ENCODE measurements at regions of chr15 and their contacts with region 1.

Region 1: GRCh38 chr15:25933456-25934158 is 70.5 kb upstream of the ATP10A start:
- DNase-seq: peak; percentile 75
- ATAC-seq: peak; percentile 95
- H3K4me3 ChIP-seq: peak overlapping the region; percentile 59
- H3K27ac ChIP-seq: no peak overlapping the region
- H3K4me1 ChIP-seq: no peaks in the 10 kb centered on the region
- H3K27me3 ChIP-seq: no peaks in the 10 kb centered on the region
- CTCF ChIP-seq: peak; percentile 76

Region 2: DNA sequence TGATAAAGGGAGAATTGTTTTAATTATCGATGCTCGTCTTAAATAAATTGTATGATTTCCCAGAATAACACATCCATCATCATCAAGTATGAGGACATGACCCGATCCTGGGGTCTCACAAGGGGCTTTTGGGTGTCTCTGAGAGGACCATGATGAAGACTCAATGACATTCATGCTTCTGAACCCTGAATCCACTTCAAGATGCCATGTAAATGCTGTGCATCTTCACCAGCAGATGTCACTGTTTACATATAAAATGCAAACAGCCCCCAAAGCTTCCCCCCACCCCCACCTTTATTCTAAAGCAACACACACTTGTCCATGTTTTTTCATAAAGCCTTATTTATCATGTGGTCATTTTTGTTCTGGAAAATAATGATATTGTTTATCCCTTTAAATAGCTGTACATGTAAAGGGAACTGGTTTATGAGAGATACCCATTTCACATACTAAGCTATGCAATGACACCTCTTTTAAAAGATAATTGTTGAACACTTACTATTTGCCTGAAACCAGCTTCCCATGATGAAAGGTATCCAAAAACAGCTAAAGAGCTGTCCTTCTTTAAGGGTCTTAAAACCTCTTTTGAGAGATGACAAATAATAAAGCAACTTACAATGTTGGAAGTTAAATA is 425.1 kb before region 1 on chr15:
- CTCF ChIA-PET with region 1: no interaction called
- POLR2A ChIA-PET with region 1: no interaction called
- intact Hi-C with region 1: loop called (anchors 2 kb)
- DNase-seq: peak; percentile 42
- ATAC-seq: no peak
- H3K4me3 ChIP-seq: no peak overlapping the region
- H3K27ac ChIP-seq: no peak overlapping the region
- H3K4me1 ChIP-seq: no peaks in the 10 kb centered on the region; the same call in 1 of the 2 replicates
- H3K27me3 ChIP-seq: no peaks in the 10 kb centered on the region
- CTCF ChIP-seq: peak; percentile 86

Region 3: DNA sequence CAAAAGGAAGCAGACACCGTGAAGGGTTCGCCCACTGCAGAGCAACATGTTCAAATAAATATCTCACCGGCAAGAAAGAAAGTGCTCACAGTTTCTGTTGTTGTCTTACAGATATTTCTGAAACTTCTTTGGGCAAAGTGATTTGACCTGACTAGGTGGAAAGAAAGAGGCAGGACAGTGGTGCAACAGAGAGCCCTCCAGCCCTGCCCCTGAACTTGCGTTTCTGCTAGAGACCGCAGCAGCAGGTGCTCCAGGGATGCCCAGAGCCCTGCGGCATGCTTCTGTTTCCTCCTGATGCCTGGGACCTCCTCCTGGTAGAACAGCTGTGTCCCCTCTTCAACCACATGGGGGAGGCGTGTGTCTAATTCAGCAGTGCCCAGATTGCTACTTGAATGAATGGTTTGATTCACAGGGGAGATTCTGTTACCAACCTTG is 193.9 kb before region 1 on chr15:
- CTCF ChIA-PET with region 1: no interaction called
- POLR2A ChIA-PET with region 1: no interaction called
- intact Hi-C with region 1: loop called (anchors 2 kb)
- DNase-seq: peak; percentile 38
- ATAC-seq: peak; percentile 49; the same call in 1 of the 2 replicates
- H3K4me3 ChIP-seq: no peak overlapping the region
- H3K27ac ChIP-seq: no peak overlapping the region
- H3K4me1 ChIP-seq: no peaks in the 10 kb centered on the region
- H3K27me3 ChIP-seq: no peaks in the 10 kb centered on the region
- CTCF ChIP-seq: peak; percentile 49

Region 4: DNA sequence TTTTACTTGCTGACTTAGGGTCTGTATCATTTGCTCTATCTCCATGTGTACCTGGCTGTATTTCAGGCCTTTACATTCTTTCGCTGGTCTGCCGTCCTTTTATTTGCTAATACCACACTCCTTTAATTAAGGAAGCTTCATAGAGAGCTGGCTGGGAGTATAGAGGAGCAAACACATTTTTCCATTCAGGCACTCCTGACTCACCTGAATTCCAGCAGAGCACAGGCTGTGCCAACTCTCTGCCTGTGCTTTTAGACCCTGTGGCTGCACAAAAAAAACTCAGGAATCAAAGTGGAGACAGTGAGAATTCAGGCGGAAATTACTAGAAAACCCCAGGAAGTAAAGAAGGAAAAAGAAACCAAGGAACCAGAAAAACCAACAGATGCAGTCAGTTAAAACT is 41.5 kb before region 1 on chr15:
- CTCF ChIA-PET with region 1: no interaction called
- POLR2A ChIA-PET with region 1: no interaction called
- intact Hi-C with region 1: loop called (anchors 5 kb)
- DNase-seq: peak; percentile 71
- ATAC-seq: peak; percentile 60
- H3K4me3 ChIP-seq: no peak overlapping the region
- H3K27ac ChIP-seq: peak overlapping the region; percentile 44
- H3K4me1 ChIP-seq: peaks cover 65% of the 10 kb centered on the region
- H3K27me3 ChIP-seq: no peaks in the 10 kb centered on the region
- CTCF ChIP-seq: no peak

Region 5: DNA sequence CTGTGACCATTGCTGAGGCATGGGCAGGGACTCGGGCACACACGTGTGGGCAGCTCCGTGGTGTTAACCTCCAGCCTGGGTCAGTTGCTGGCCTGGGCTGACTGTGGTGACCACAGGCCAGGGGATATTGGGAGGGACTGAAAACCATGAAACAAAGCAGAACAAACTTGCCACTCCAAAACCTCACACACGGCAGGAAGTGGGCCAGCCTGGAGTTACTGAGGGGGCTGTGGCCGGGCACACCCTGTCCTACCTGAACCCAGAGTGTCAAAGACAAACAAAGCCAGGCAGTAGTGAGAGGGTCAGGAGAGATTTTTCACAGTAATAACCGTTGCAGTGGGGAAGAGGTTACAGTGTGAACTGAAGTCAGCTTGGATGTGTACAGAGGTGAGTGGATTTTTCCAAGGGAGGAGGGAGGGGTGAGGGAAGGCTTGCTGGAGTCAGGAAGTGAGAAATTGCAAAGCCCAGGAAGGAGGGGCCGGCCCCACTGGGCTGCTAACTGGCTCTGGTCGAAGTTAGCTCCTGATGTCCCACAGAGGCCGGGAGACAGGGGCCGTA is 30.5 kb before region 1 on chr15:
- CTCF ChIA-PET with region 1: interaction called, 21 read pairs
- POLR2A ChIA-PET with region 1: no interaction called
- intact Hi-C with region 1: no loop called
- DNase-seq: peak; percentile 80
- ATAC-seq: peak; percentile 78
- H3K4me3 ChIP-seq: no peak overlapping the region
- H3K27ac ChIP-seq: peak overlapping the region; percentile 74
- H3K4me1 ChIP-seq: peaks cover 47% of the 10 kb centered on the region
- H3K27me3 ChIP-seq: no peaks in the 10 kb centered on the region
- CTCF ChIP-seq: no peak

Measured in PC-3 (cell line).